ENCODE measurements at regions of chr12 and their contacts with region 1.

Region 1: GRCh38 chr12:47949441-47950308 is 13.7 kb upstream of the TMEM106C start:
- DNase-seq: peak; percentile 69
- ATAC-seq: peak; percentile 98
- H3K4me3 ChIP-seq: no peak overlapping the region
- H3K27ac ChIP-seq: no peak overlapping the region; the same call in 1 of the 2 replicates
- H3K4me1 ChIP-seq: peaks cover 12 to 46% of the 10 kb centered on the region in 2 experiments; a peak in 3 of 4 replicates
- H3K27me3 ChIP-seq: no peaks in the 10 kb centered on the region
- CTCF ChIP-seq: peak; percentile 85 to 96 (median 91)
- POLR2A ChIP-seq: no peak
- RAD21 ChIP-seq: peak; percentile 89

Region 2: DNA sequence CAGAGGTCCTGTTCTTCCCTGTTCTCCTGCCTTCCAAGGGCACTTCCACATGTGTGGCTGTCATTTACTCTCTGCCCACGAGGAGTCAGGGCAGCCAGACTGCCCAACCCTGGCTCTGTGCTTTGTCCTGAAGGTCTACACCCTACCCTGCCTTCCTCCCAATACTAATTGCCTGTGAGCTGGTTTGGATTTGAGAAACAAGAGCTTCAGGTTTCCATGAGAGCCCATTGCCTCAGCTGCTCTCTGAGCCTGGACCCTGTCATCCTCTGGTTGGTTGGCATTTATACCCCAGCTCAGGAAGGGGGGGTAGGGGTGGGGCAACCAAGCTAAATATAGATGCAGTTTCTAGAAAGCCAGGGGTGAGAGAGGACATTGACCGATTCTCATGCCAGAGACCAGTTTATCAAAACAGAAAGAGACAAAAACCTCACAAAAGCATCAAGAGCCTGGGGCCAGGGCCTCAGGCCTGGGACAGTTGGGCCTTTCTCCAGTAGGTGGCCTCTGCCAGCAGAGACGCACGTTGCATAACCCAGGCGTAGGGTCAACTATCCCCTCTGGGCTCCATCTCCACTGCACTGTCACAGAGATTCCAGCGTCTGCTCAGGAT is 79.4 kb before region 1 on chr12:
- CTCF ChIA-PET with region 1: no interaction called
- POLR2A ChIA-PET with region 1: no interaction called
- RAD21 ChIA-PET with region 1: no interaction called
- intact Hi-C with region 1: loop called (anchors 1 kb)
- DNase-seq: no peak
- ATAC-seq: peak; percentile 91
- H3K4me3 ChIP-seq: no peak overlapping the region
- H3K27ac ChIP-seq: no peak overlapping the region
- H3K4me1 ChIP-seq: peaks cover 0 to 4% of the 10 kb centered on the region in 2 experiments; a peak in 1 of 4 replicates
- H3K27me3 ChIP-seq: no peaks in the 10 kb centered on the region
- CTCF ChIP-seq: peak; percentile 30 to 64 (median 52); a peak in 5 of 6 replicates
- POLR2A ChIP-seq: no peak
- RAD21 ChIP-seq: 0 out of 2 replicates have a peak, but pooled peaks have one; percentile 8

Region 3: DNA sequence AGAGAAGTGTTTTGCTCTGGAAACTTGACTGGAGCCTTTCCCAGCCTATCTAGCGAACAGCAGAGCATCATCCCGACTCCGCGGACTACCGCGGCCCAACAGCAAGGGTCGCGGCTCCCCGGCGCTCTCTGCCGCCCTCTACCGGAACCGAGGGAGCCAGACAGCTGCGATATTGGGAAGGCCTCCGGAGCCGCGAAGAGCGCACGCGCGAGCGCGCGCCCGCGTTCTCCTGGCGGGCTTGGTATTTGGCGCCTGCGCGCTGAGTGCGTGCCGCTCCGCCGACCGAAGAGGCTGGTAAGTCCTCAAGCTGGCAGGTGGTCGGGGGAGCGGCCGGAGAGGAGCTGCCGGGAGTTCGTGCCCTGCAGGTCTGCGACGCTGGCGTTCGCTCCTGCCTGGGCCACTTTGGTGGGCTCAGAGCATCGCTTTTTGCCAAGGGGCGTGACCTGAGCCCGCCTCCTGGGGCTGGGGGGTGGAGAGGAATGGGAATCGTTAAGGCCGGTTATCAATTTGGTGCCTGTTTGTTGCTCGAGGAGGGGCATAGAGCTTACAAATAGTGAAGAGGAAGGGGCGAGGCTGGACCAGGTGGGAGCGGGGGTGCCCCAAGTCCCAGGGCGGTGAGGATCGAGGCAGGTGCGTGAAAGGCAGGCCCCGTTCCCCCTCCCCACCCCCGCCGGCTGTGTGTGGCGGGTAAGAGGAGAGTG is 13.8 kb after region 1 on chr12 and contains the start of gene TMEM106C:
- CTCF ChIA-PET with region 1: interaction called, 12 read pairs
- POLR2A ChIA-PET with region 1: no interaction called
- RAD21 ChIA-PET with region 1: no interaction called
- intact Hi-C with region 1: no loop called
- DNase-seq: peak; percentile 80
- ATAC-seq: peak; percentile 96
- H3K4me3 ChIP-seq: peak within 1 kb of the TSS; percentile 79 to 80
- H3K27ac ChIP-seq: peak within 1 kb of the TSS; percentile 73
- H3K4me1 ChIP-seq: peaks cover 3 to 13% of the 10 kb centered on the region in 2 experiments; a peak in 3 of 4 replicates
- H3K27me3 ChIP-seq: no peaks in the 10 kb centered on the region
- CTCF ChIP-seq: peak; percentile 89 to 96 (median 92)
- POLR2A ChIP-seq: peak; percentile 62
- RAD21 ChIP-seq: peak; percentile 67
- total RNA-seq, gene TMEM106C: 94.7 TPM